ENCODE measurements at regions of chr4 and their contacts with region 1.

Region 1: GRCh38 chr4:165060942-165061341 is 7.3 kb downstream of the TRIM75 start:
- DNase-seq: no peak
- H3K4me3 ChIP-seq: no peak overlapping the region
- H3K27ac ChIP-seq: no peak overlapping the region
- H3K4me1 ChIP-seq: no peaks in the 10 kb centered on the region
- H3K27me3 ChIP-seq: no peaks in the 10 kb centered on the region
- CTCF ChIP-seq: peak in 2 of 3 experiments; percentile 15 to 17; a peak in 2 of 4 replicates
- EP300 ChIP-seq: no peak
- POLR2A ChIP-seq: no peak
- RAD21 ChIP-seq: peak; percentile 36 to 44; a peak in 3 of 4 replicates

Region 2: DNA sequence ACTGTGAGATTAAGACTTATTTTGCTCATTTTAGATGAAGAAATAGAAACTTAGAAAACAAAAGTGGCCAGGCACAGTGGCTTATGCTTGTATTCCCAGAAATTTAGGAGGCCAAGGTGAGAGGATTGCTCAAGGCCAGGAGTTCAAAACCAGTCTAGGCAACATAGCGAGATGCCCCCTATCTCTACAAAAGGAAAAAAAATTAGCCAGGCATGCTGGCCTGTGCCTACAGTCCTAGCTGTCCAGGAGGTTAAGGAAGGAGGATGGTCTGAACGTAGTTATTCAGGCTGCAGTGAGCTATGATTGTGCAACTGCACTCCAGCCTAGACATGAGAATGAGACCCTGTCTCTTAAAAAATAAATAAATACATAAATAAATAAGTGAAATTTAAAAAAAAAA is 156.0 kb before region 1 on chr4:
- CTCF ChIA-PET with region 1: no interaction called
- POLR2A ChIA-PET with region 1: no interaction called
- DNase-seq: no peak
- H3K4me3 ChIP-seq: no peak overlapping the region
- H3K27ac ChIP-seq: no peak overlapping the region
- H3K4me1 ChIP-seq: peaks cover 0 to 8% (median 0%) of the 10 kb centered on the region in 4 experiments; a peak in 4 of 7 replicates
- H3K27me3 ChIP-seq: no peaks in the 10 kb centered on the region
- CTCF ChIP-seq: no peak
- EP300 ChIP-seq: no peak
- POLR2A ChIP-seq: no peak
- RAD21 ChIP-seq: no peak

Region 3: DNA sequence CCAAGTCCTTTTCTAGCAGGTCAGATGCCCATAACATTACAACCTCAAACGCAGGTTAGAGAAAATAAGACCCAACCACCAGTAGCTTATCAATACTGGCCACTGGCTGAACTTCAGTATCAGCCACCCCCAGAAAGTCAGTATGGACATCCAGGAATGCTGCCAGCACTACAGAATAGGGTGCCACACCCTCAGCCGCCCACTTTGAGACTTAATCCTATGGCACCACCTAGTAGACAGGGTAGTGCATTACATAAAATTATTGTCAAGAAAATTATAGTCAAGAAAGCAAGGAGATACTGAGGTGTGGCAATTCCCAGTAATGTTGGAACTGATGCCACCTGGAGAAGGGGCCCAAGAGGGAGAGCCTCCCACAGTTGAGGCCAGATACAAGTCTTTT is 63.6 kb before region 1 on chr4:
- CTCF ChIA-PET with region 1: no interaction called
- POLR2A ChIA-PET with region 1: no interaction called
- DNase-seq: no peak
- H3K4me3 ChIP-seq: no peak overlapping the region
- H3K27ac ChIP-seq: no peak overlapping the region
- H3K4me1 ChIP-seq: no peaks in the 10 kb centered on the region
- H3K27me3 ChIP-seq: no peaks in the 10 kb centered on the region
- CTCF ChIP-seq: peak in 2 of 3 experiments; percentile 13 to 35; a peak in 3 of 4 replicates
- EP300 ChIP-seq: no peak
- POLR2A ChIP-seq: no peak
- RAD21 ChIP-seq: peak; percentile 61 to 67

Region 4: DNA sequence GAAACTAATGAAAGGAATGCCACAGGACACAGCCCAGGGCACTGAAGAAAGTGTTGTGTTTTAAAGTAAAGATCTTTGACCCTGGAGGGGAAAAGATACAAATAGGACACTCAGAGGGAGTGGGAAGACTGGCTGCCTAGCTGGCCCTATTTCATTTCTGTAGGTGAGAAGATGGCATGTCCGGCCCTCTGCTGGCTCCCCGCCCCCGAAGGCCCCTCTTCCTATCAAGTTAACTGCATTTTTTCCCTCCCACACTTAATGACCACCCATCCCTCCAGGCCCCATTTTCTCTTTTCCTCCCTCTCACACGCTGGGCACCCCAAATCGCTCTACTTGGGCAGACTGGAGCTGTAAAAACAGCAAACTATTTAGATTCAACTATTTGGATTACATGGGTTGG is 12.8 kb before region 1 on chr4:
- CTCF ChIA-PET with region 1: interaction called, 13 read pairs
- POLR2A ChIA-PET with region 1: no interaction called
- DNase-seq: no peak
- H3K4me3 ChIP-seq: no peak overlapping the region
- H3K27ac ChIP-seq: no peak overlapping the region
- H3K4me1 ChIP-seq: no peaks in the 10 kb centered on the region
- H3K27me3 ChIP-seq: no peaks in the 10 kb centered on the region
- CTCF ChIP-seq: no peak
- EP300 ChIP-seq: no peak
- POLR2A ChIP-seq: no peak
- RAD21 ChIP-seq: no peak